ENCODE measurements at regions of chrX and their contacts with region 1.

Region 1: DNA sequence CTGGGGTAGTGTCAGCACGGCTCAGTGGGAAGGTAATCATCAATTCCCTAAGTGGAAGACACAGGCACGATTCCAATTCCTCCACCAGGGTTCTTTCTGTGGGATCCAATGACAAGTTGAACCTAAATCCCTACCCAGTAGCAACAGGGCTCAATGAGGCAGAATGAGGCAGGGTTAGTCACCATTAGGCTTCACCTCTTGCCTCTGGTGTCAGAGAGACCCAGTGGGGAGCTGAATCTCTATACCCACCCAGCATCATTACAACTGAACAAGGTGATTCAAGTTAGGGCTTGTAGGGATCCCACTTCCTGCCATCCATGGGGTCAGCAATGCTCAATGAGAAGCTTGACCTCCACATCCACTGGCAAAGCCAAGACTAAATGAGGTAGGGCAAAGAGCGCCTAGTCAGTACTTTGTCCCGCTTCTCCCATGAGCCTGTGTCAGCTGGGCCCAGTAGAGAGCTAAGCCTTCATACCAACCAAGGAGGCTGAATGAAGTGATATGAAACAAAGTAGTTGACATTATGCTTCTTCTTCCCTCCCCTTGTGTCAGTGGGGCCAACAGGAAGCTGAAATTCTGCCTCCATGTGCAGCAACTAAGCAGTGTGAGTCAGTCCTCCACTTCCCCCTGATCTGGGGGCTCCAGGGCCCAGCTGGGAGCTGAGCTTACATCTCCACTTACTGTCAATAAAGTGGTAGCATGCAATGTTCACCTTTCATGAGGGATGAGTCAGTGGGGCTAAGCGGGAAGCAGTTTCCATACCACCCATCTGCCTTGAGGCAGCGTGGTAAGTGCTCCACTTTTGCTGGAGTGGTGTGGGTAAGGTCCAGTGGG is 36.4 kb upstream of the RBM41 start:
- DNase-seq: peak; percentile 81
- ATAC-seq: peak; percentile 98
- H3K4me3 ChIP-seq: peak overlapping the region; percentile 59
- H3K27ac ChIP-seq: peak overlapping the region; percentile 77
- H3K4me1 ChIP-seq: peaks cover 11% of the 10 kb centered on the region
- H3K27me3 ChIP-seq: no peaks in the 10 kb centered on the region
- CTCF ChIP-seq: no peak

Region 2: GRCh38 chrX:106862972-106863688 is 291.9 kb before region 1 on chrX:
- CTCF ChIA-PET with region 1: no interaction called
- POLR2A ChIA-PET with region 1: no interaction called
- intact Hi-C with region 1: no loop called
- DNase-seq: peak; percentile 61
- ATAC-seq: peak; percentile 66
- H3K4me3 ChIP-seq: no peak overlapping the region
- H3K27ac ChIP-seq: no peak overlapping the region
- H3K4me1 ChIP-seq: no peaks in the 10 kb centered on the region
- H3K27me3 ChIP-seq: no peaks in the 10 kb centered on the region
- CTCF ChIP-seq: peak; percentile 67

Region 3: DNA sequence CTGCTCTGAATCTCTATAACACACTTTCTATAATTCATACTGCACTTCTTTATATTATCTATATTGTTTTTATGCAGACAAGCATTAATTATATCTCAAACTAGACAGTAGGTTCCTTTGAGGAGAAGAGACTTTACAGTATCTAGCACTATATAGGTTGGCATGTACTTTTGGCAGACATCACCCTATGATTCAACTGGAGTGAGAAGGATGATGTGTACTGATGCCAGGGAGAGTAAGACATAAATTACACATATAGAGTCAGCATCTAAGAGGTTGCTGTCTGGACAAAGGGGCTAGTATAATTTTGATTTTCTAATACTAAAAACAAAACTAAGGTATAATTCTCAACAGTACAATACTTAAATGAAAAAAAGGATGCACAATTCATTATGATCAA is 31.3 kb before region 1 on chrX:
- CTCF ChIA-PET with region 1: no interaction called
- POLR2A ChIA-PET with region 1: no interaction called
- intact Hi-C with region 1: loop called (anchors 1 kb)
- DNase-seq: peak; percentile 48
- ATAC-seq: peak; percentile 84
- H3K4me3 ChIP-seq: no peak overlapping the region
- H3K27ac ChIP-seq: no peak overlapping the region
- H3K4me1 ChIP-seq: peaks cover 5% of the 10 kb centered on the region
- H3K27me3 ChIP-seq: no peaks in the 10 kb centered on the region
- CTCF ChIP-seq: no peak

Measured in PC-3 (cell line).